A673 (cell line): ENCODE measurements at regions of chr4 and their contacts with region 1.

Region 1: DNA sequence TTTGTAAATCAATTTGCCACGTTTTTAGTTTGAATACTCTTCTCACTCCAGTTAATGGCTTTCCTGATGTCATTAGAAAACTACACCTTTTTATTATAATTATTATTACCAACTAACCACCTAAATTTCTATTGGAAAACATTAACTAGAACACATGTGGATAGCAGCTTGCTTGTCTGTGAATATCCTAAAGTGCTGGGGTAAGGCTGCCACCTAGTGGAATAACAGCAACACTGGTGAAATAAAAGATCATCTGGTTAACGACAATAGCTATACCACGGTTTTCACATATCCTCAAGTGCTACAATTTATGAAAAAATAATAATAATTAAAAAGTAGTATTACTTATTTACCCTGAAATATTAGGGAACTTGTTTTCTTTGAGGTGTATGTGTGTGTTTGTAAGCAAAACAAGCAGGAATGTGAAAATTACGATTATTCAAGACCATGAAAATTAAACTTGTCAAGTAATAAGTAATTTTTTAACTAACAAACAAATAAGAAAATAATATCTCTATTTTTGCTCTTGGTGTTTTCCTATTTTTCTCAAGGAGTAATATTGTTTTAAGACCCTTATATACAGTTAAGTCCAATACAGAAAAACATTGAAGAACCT is 130.1 kb upstream of the TECRL start:
- DNase-seq: peak; percentile 43
- H3K4me3 ChIP-seq: no peak overlapping the region
- H3K27ac ChIP-seq: no peak overlapping the region
- H3K4me1 ChIP-seq: no peaks in the 10 kb centered on the region
- H3K27me3 ChIP-seq: no peaks in the 10 kb centered on the region
- CTCF ChIP-seq: peak; percentile 62

Region 2: DNA sequence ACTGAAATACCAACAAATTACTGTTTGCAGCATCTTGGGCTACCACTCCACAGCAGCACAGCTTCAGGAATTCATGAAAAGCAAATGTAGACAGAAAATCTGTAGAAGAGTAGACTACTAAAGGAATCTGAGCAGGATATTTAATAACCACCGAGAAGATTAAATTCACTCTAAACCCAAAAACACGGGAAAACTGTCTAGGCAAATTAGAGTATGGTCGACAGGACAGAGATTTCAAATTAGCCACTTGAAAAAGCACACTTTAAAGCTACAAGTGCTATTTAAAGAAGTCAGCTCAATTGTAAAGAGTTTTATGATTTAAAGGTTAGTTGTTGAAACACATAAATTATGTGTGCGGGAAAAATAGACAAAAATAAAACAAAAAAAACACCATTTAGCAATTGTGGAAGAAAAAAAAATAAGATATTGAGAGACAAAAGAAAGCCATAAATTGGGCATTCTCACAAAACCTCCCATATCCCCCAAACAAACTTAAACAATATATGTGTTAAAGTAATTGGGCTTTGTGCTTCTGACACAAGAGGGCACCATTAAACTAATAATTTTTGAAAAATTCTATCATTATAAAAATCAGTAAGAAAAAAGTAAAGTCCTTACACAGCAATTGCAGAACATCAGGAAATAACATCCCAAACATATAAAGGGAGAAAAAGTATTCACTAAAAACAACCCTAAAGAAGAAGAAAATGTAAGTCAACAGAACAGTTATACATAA is 1010.9 kb before region 1 on chr4:
- CTCF ChIA-PET with region 1: no interaction called
- POLR2A ChIA-PET with region 1: no interaction called
- intact Hi-C with region 1: loop called (anchors 10 kb)
- DNase-seq: peak; percentile 0
- H3K4me3 ChIP-seq: no peak overlapping the region
- H3K27ac ChIP-seq: no peak overlapping the region
- H3K4me1 ChIP-seq: no peaks in the 10 kb centered on the region
- H3K27me3 ChIP-seq: no peaks in the 10 kb centered on the region
- CTCF ChIP-seq: no peak

Region 3: GRCh38 chr4:64158648-64159326 is 380.6 kb before region 1 on chr4:
- CTCF ChIA-PET with region 1: interaction called, 4 read pairs
- POLR2A ChIA-PET with region 1: no interaction called
- intact Hi-C with region 1: loop called (anchors 5 kb)
- DNase-seq: peak; percentile 50
- H3K4me3 ChIP-seq: peak overlapping the region; percentile 19
- H3K27ac ChIP-seq: no peak overlapping the region
- H3K4me1 ChIP-seq: no peaks in the 10 kb centered on the region
- H3K27me3 ChIP-seq: no peaks in the 10 kb centered on the region
- CTCF ChIP-seq: peak; percentile 65

Region 4: DNA sequence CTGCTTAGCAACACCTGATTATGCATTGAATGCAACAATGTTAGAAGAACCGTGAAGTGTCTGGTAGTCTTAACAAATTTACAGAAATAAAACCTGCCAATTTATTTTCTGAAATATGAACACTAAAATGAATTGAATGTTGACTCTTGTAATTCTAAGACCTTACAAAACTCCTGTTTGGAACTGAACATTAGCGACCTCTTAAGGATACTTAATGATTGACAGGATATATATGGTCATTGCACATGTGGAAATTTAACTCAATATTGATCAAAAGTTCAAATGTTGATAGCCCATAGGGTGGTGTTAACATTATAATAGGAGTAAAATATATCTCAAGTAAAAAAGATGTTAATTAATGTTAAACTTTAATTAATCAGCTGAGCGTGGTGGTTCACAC is 209.2 kb before region 1 on chr4:
- CTCF ChIA-PET with region 1: no interaction called
- POLR2A ChIA-PET with region 1: no interaction called
- intact Hi-C with region 1: no loop called
- DNase-seq: no peak
- H3K4me3 ChIP-seq: no peak overlapping the region
- H3K27ac ChIP-seq: no peak overlapping the region
- H3K4me1 ChIP-seq: no peaks in the 10 kb centered on the region
- H3K27me3 ChIP-seq: no peaks in the 10 kb centered on the region
- CTCF ChIP-seq: no peak